Mammary epithelial cell (primary cell): ENCODE measurements at regions of chr13 and their contacts with region 1.

Region 1: GRCh38 chr13:35720690-35721554 is 244.4 kb upstream of the MAB21L1 start:
- DNase-seq: peak; percentile 9
- H3K4me3 ChIP-seq: no peak overlapping the region
- H3K27ac ChIP-seq: no peak overlapping the region
- H3K4me1 ChIP-seq: no peaks in the 10 kb centered on the region
- H3K27me3 ChIP-seq: no peaks in the 10 kb centered on the region
- CTCF ChIP-seq: peak; percentile 83 to 95

Region 2: DNA sequence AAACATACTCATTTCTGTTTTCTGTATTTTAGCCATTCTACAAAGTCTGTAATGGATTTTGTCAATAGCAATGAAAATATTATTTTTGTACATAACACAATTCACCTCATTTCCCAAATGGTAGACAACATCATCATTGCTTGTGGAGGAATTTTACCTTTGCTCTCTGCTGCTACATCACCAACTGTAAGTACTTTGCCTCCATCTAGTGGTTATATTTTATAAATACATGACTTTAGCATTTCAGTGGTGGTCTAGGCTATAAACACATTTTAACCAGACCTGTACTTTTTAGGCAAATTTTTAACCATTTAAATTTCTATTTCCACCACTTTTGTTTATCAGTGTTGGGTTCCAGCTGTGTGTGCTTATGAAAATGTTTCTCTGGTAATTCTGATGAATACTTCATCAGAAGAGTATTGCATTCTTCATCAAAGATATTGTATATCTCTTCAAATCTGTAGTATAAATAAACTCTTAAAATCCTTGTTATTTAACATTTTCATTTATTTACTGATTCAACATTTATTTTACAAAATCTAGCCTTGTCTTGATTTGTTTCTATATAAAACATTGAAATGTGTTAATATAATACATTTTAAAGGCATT is 556.5 kb before region 1 on chr13:
- CTCF ChIA-PET with region 1: no interaction called
- dilution Hi-C with region 1: no loop called
- in situ Hi-C with region 1: no loop called
- intact Hi-C with region 1: loop called (anchors 1 kb)
- DNase-seq: peak; percentile 6
- H3K4me3 ChIP-seq: no peak overlapping the region
- H3K27ac ChIP-seq: no peak overlapping the region
- H3K4me1 ChIP-seq: no peaks in the 10 kb centered on the region
- H3K27me3 ChIP-seq: no peaks in the 10 kb centered on the region
- CTCF ChIP-seq: peak; percentile 50 to 63

Region 3: GRCh38 chr13:35210261-35210660 is 510.7 kb before region 1 on chr13:
- CTCF ChIA-PET with region 1: no interaction called
- dilution Hi-C with region 1: no loop called
- in situ Hi-C with region 1: loop called in 1 of 2 experiments (anchors 10 kb)
- intact Hi-C with region 1: loop called (anchors 1 kb)
- DNase-seq: no peak
- H3K4me3 ChIP-seq: no peak overlapping the region
- H3K27ac ChIP-seq: no peak overlapping the region
- H3K4me1 ChIP-seq: no peaks in the 10 kb centered on the region
- H3K27me3 ChIP-seq: no peaks in the 10 kb centered on the region
- CTCF ChIP-seq: peak in 1 of 2 donors; percentile 24

Region 4: GRCh38 chr13:35468195-35468594 is 252.7 kb before region 1 on chr13:
- CTCF ChIA-PET with region 1: no interaction called
- dilution Hi-C with region 1: no loop called
- in situ Hi-C with region 1: no loop called
- intact Hi-C with region 1: loop called (anchors 10 kb)
- DNase-seq: no peak
- H3K4me3 ChIP-seq: no peak overlapping the region
- H3K27ac ChIP-seq: no peak overlapping the region
- H3K4me1 ChIP-seq: no peaks in the 10 kb centered on the region
- H3K27me3 ChIP-seq: peaks cover 10% of the 10 kb centered on the region
- CTCF ChIP-seq: no peak

Region 5: GRCh38 chr13:35630551-35631275 is 90.2 kb before region 1 on chr13:
- CTCF ChIA-PET with region 1: no interaction called
- dilution Hi-C with region 1: no loop called
- in situ Hi-C with region 1: loop called in 1 of 2 experiments (anchors 5 kb)
- intact Hi-C with region 1: loop called (anchors 1 kb)
- DNase-seq: peak; percentile 40
- H3K4me3 ChIP-seq: no peak overlapping the region
- H3K27ac ChIP-seq: no peak overlapping the region
- H3K4me1 ChIP-seq: no peaks in the 10 kb centered on the region
- H3K27me3 ChIP-seq: no peaks in the 10 kb centered on the region
- CTCF ChIP-seq: peak; percentile 75 to 78

Region 6: GRCh38 chr13:35789335-35790165 is 68.6 kb after region 1 on chr13:
- CTCF ChIA-PET with region 1: no interaction called
- dilution Hi-C with region 1: no loop called
- in situ Hi-C with region 1: no loop called
- intact Hi-C with region 1: loop called (anchors 2 kb)
- DNase-seq: peak; percentile 19
- H3K4me3 ChIP-seq: no peak overlapping the region
- H3K27ac ChIP-seq: no peak overlapping the region
- H3K4me1 ChIP-seq: no peaks in the 10 kb centered on the region
- H3K27me3 ChIP-seq: no peaks in the 10 kb centered on the region
- CTCF ChIP-seq: peak; percentile 49 to 62

Region 7: DNA sequence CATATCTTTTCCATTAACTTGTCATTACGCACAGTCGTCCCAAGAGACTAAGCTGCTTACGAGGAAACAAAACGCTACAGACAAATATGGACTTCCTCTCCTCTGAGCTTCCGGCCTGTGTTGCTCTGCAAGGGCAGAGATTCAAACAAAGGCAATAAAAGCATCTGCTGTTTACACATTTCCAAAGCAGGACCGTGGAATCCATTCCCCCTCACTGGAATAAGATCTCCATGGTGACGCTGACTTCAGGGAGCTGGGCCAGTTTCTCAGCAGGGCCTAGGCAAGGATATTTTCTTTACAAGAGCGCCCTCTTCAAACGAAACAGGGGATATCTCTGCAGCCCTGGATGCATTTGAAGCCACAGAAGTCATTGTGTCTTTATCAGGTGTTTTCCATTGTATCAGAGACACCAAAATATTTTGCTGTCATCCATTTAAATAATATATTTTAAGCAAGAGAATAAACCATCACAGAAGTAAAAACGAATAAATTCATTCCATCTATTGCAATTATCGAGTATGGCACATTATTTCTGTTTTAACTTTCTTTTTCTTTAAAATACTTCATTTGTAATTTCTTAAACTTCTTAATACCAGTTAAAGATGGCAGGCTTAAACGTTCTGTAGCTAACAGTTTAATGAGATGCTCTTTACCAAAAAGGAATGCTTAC is 232.8 kb after region 1 on chr13:
- CTCF ChIA-PET with region 1: no interaction called
- dilution Hi-C with region 1: no loop called
- in situ Hi-C with region 1: no loop called
- intact Hi-C with region 1: loop called (anchors 2 kb)
- DNase-seq: peak; percentile 38
- H3K4me3 ChIP-seq: no peak overlapping the region
- H3K27ac ChIP-seq: no peak overlapping the region
- H3K4me1 ChIP-seq: no peaks in the 10 kb centered on the region
- H3K27me3 ChIP-seq: no peaks in the 10 kb centered on the region
- CTCF ChIP-seq: peak; percentile 42 to 66

Region 8: DNA sequence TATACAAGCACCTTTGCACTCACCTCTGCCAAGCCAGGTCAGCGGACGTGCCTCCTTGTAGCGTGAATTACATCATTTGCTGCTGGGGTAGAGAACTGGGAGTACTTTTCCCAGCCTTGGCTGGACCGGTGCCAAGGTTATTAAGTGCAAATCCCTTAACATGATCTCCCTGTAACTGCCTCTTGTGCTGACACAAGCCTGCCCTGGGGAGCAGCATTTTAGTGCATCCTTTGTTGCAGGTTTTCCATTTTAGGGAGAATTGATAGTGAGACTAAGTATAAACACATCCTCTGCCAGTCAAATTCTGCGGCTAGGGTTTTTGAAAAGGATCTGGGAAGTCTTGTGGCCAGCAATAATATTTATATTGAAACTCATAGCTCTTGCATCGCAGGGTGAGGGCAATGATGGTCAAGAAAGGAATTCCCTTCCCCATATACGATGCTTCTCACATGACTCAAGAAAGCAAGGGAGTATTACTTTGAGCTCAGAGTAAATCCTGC is 442.9 kb after region 1 on chr13:
- CTCF ChIA-PET with region 1: no interaction called
- dilution Hi-C with region 1: no loop called
- in situ Hi-C with region 1: no loop called
- intact Hi-C with region 1: no loop called
- DNase-seq: peak; percentile 84
- H3K4me3 ChIP-seq: no peak overlapping the region
- H3K27ac ChIP-seq: peak overlapping the region; percentile 53
- H3K4me1 ChIP-seq: peaks cover 11% of the 10 kb centered on the region
- H3K27me3 ChIP-seq: no peaks in the 10 kb centered on the region
- CTCF ChIP-seq: no peak